Esophagus muscularis mucosa (tissue), 4 donors: ENCODE measurements at regions of chr6 and their contacts with region 1.

Region 1: GRCh38 chr6:56595490-56596122 is 47.1 kb downstream of the DST start:
- DNase-seq: no peak
- H3K4me3 ChIP-seq: no peak overlapping the region
- H3K27ac ChIP-seq: peak overlapping the region; percentile 32 to 43 (median 38)
- H3K4me1 ChIP-seq: peaks cover 0 to 43% (median 40%) of the 10 kb centered on the region in 4 donors
- H3K27me3 ChIP-seq: no peaks in the 10 kb centered on the region
- CTCF ChIP-seq: peak; percentile 46 to 68 (median 55)
- EP300 ChIP-seq: no peak
- POLR2A ChIP-seq: no peak

Region 2: DNA sequence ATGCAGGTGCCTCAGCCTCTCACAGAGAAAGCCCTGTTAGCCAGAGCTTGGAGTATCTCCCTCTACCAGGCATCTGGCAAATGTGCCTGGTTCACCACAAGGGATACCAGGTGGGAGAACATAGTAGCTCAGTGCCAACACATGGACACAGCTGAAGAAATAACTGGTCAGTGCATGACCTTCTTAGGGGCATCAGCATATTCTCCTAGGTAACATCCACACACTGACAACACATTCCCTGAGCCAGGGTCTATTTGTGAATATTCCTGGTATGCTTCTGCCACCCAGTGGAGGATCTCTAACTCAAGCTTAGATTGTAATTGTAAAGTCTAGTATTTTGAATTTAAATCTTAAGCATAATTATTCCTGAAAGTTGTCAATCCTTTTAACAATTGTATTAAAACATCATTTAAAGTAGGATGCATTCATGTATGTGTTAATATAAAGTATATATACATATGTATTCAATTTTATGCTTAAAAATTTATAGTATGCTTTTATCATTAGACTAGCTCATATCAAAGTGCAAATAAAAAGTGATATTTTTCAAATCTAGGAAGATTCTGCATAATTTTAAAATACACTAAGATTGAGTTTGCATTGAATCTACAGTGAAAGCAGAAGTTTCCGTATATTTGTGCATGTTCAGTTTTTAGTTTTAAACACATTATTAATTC is 303.0 kb before region 1 on chr6:
- intact Hi-C with region 1: no loop called
- DNase-seq: no peak
- H3K4me3 ChIP-seq: no peak overlapping the region
- H3K27ac ChIP-seq: no peak overlapping the region
- H3K4me1 ChIP-seq: peaks cover 5 to 16% (median 11%) of the 10 kb centered on the region in 4 donors
- H3K27me3 ChIP-seq: no peaks in the 10 kb centered on the region
- CTCF ChIP-seq: peak; percentile 56 to 68 (median 60)
- EP300 ChIP-seq: no peak
- POLR2A ChIP-seq: no peak

Region 3: DNA sequence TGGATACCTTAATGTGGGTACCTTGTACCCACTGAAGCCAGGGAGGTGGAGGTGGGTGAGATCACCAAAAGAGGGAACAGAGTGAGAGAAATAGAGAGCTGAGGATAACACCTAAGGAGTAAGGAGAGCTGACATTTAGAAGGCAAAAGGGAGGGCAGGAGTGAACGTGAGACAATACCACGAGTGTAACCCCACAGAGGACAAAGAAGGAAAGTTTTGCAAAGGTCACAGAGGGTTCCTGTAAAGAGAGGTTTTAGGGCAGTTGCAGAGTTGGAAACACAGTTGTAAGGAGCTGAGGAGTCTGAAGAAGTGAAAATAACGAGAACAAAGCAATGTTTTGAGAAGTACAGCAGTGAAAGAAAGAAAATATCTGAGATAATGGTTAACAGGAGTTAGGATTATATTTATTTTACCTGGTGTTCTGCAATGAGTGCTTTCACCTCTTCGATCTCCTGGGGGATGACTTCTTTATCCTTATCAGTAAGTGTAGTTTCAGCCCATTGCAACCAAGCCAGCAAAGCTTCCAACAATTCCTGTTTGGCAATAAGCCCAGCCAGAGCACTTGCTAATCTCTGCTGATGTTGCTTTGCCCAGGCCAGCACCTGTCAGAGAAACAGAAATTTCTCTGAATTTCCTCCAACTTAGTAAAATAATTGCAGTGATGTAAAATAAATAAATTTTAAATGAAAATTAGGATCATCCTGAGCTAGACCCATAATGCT is 119.7 kb before region 1 on chr6:
- intact Hi-C with region 1: loop called (anchors 10 kb)
- DNase-seq: no peak
- H3K4me3 ChIP-seq: no peak overlapping the region
- H3K27ac ChIP-seq: peak overlapping the region in 1 of 4 donors; percentile 26
- H3K4me1 ChIP-seq: peaks cover 17 to 34% (median 31%) of the 10 kb centered on the region in 4 donors
- H3K27me3 ChIP-seq: no peaks in the 10 kb centered on the region
- CTCF ChIP-seq: no peak
- EP300 ChIP-seq: no peak
- POLR2A ChIP-seq: no peak

Region 4: GRCh38 chr6:56555438-56555872 is 40.2 kb before region 1 on chr6:
- intact Hi-C with region 1: loop called (anchors 5 kb)
- DNase-seq: no peak
- H3K4me3 ChIP-seq: no peak overlapping the region
- H3K27ac ChIP-seq: peak overlapping the region; percentile 42 to 60 (median 44)
- H3K4me1 ChIP-seq: peaks cover 19 to 41% (median 37%) of the 10 kb centered on the region in 4 donors
- H3K27me3 ChIP-seq: no peaks in the 10 kb centered on the region
- CTCF ChIP-seq: no peak
- EP300 ChIP-seq: no peak
- POLR2A ChIP-seq: no peak

Region 5: DNA sequence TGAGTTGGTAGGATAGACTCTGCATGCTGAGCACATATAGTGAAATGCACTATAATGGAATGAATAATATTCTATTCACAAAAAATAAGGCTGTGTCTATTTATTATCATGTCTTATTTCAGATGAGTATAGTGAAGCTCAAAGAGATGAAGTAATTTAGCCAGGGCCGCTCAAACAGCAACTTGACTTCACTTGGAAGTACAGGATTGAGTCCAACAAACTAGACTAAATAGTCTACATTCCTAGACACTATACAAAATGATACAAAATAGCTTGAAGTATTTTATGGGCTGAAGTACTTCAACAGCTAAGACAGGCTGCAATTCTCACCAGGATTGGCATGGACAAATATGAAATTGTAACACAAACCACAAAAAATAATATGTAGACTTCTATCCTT is 191.6 kb after region 1 on chr6:
- intact Hi-C with region 1: no loop called
- DNase-seq: no peak
- H3K4me3 ChIP-seq: no peak overlapping the region
- H3K27ac ChIP-seq: no peak overlapping the region
- H3K4me1 ChIP-seq: peaks cover 18 to 26% (median 24%) of the 10 kb centered on the region in 4 donors
- H3K27me3 ChIP-seq: no peaks in the 10 kb centered on the region
- CTCF ChIP-seq: no peak
- EP300 ChIP-seq: no peak
- POLR2A ChIP-seq: no peak